A549 (cell line): ENCODE measurements at regions of chr5 and their contacts with region 1.

Region 1: GRCh38 chr5:56200856-56201666 is 32.1 kb downstream of the ANKRD55 start:
- DNase-seq: peak; percentile 72 to 90
- ATAC-seq: peak; percentile 100
- H3K4me3 ChIP-seq: no peak overlapping the region
- H3K27ac ChIP-seq: peak overlapping the region; percentile 65 to 82
- H3K4me1 ChIP-seq: peaks cover 28% of the 10 kb centered on the region
- CTCF ChIP-seq: peak; percentile 93
- EP300 ChIP-seq: no peak
- POLR2A ChIP-seq: no peak
- RAD21 ChIP-seq: peak; percentile 99

Region 2: GRCh38 chr5:55982957-55983381 is 218.1 kb before region 1 on chr5:
- CTCF ChIA-PET with region 1: interaction called, 19 read pairs
- POLR2A ChIA-PET with region 1: no interaction called
- DNase-seq: peak in 1 of 2 experiments; percentile 60
- ATAC-seq: peak; percentile 79 to 84; a peak in 5 of 6 replicates
- H3K4me3 ChIP-seq: no peak overlapping the region
- H3K27ac ChIP-seq: peak overlapping the region; percentile 6 to 66; a peak in 3 of 6 replicates
- H3K4me1 ChIP-seq: peaks cover 39% of the 10 kb centered on the region
- CTCF ChIP-seq: peak; percentile 43; the same call in 2 of the 3 replicates
- EP300 ChIP-seq: no peak
- POLR2A ChIP-seq: no peak
- RAD21 ChIP-seq: peak; percentile 55 to 65

Region 3: DNA sequence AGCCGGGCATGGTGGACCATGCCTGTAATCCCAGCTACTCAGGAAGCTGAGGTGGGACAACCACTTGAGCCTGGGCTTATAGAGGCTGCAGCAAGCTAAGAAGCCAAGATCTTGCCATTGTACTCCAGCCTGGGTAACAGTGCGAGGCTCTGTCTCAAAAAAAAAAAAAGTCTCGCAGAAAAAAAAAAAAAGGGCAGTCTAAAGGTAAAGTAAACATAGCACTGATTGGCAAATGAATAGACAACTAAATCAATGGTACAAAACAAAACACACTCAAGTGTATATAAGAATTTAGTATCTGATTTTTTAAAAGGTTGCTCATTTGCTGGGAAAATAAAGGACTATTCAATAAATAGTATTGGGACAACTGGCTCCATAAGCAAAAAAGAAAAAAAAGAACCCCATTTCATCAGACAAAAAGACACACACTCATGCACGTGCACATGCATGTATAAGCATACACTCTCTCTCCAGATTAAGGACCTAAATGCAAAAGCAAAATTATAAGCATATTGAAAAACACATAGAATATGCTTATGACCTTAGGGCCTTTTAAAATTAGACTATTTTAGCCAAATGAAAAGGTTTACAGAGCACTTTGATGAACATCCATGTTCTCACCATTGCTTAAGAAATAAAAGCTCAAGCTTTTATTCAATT is 212.0 kb before region 1 on chr5:
- CTCF ChIA-PET with region 1: interaction called, 19 read pairs
- POLR2A ChIA-PET with region 1: no interaction called
- DNase-seq: no peak
- ATAC-seq: no peak
- H3K4me3 ChIP-seq: no peak overlapping the region
- H3K27ac ChIP-seq: no peak overlapping the region
- H3K4me1 ChIP-seq: peaks cover 39% of the 10 kb centered on the region
- CTCF ChIP-seq: no peak
- EP300 ChIP-seq: no peak
- POLR2A ChIP-seq: no peak
- RAD21 ChIP-seq: no peak

Region 4: GRCh38 chr5:56211298-56211865 is 10.3 kb after region 1 on chr5:
- CTCF ChIA-PET with region 1: interaction called, 22 read pairs
- POLR2A ChIA-PET with region 1: no interaction called
- DNase-seq: peak; percentile 52 to 88
- ATAC-seq: peak; percentile 89 to 92
- H3K4me3 ChIP-seq: no peak overlapping the region
- H3K27ac ChIP-seq: peak overlapping the region; percentile 80 to 85
- H3K4me1 ChIP-seq: peaks cover 22% of the 10 kb centered on the region
- CTCF ChIP-seq: no peak
- EP300 ChIP-seq: peak; percentile 54 to 75; a peak in 3 of 5 replicates
- POLR2A ChIP-seq: no peak
- RAD21 ChIP-seq: no peak

Region 5: DNA sequence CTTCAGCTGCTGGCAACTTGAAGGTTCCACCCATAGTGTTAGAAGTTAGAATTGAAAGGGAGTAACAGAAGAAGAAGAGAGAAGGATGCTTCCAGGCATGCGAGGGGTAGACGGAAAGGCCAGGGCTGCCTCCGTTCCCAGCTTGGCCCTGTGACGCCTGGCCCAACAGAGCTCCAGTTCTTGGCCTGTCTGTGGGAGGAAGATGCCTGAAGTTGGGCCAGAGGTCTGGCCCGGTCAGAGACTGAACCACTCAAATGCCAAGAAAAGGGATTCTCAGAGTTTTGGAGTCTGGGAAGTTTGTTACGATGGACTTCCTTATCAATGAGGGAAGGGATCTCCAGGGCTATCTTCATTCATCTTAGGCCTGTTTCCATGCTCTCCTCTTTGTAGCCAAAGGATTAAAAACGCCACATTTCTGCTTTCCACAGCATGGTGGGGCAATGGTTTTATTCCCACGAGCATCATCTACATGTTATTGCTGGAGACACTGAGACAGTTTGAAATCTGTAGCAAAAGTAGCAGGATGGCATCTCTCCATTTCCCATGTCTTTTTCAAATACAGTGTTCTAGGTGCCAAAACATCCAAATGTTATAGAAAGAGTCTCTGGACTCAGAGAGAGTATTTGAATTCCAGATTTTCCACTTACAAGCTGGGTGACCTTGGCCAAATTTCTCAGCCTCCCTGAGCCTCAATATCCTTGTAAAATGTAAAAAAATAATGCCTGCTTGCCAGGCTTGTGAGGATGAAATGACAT is 97.5 kb after region 1 on chr5:
- CTCF ChIA-PET with region 1: no interaction called
- POLR2A ChIA-PET with region 1: no interaction called
- DNase-seq: no peak
- ATAC-seq: no peak
- H3K4me3 ChIP-seq: no peak overlapping the region
- H3K27ac ChIP-seq: no peak overlapping the region
- H3K4me1 ChIP-seq: peaks cover 10% of the 10 kb centered on the region; the same call in 2 of the 3 replicates
- CTCF ChIP-seq: no peak
- EP300 ChIP-seq: no peak
- POLR2A ChIP-seq: no peak
- RAD21 ChIP-seq: no peak